Heart right ventricle (tissue), 16 donors: ENCODE measurements at regions of chr18 and their contacts with region 1.

Region 1: DNA sequence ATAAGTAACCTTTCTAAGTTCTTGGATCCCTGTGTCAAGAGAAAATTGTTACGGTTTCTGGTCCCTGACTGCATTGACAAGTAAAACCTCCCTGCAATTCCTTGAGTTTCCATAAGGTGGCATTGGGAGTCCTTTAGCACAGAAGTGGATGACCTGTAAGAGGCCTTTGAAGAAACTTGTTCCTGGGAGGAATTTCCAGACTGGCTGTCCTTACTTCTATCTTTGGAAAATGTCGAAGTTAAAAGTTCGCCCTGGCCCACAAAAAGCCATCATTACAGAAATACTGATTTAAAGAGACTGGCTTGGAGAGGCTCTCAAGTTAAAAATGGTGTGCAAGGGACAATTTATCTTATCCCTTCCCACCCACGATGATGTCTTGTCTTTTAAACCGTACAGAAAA is 218.4 kb downstream of the CDH20 start:
- DNase-seq: peak in 1 of 2 donors; percentile 77
- ATAC-seq: peak; percentile 65 to 92 (median 74)
- H3K4me3 ChIP-seq: no peak overlapping the region
- H3K27ac ChIP-seq: peak overlapping the region in 3 of 10 donors; percentile 16 to 36 (median 17)
- H3K4me1 ChIP-seq: peaks cover 0 to 11% (median 4%) of the 10 kb centered on the region in 9 donors
- H3K27me3 ChIP-seq: no peaks in the 10 kb centered on the region
- CTCF ChIP-seq: peak; percentile 73 to 90 (median 88)

Region 2: DNA sequence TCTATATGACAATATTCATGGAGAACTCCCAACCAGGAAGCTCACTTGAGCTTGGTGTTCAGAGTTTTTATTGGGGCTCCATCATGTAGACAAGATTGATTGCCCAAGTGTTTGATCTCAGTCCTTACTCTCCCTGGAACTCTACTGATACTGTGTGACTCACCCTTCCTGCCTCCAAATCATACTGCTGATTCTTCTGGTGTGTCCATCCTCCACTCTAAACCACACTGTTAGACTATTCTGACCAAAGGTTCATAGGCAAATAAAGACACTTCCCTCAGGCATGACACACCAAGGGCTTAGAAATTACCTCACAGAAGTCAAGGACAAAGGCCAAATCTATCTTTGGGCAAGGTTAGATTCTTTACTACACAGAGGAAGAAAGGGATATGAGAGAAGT is 326.2 kb before region 1 on chr18:
- intact Hi-C with region 1: no loop called
- DNase-seq: no peak
- ATAC-seq: no peak
- H3K4me3 ChIP-seq: no peak overlapping the region
- H3K27ac ChIP-seq: no peak overlapping the region
- H3K4me1 ChIP-seq: no peaks in the 10 kb centered on the region
- H3K27me3 ChIP-seq: no peaks in the 10 kb centered on the region
- CTCF ChIP-seq: no peak

Region 3: DNA sequence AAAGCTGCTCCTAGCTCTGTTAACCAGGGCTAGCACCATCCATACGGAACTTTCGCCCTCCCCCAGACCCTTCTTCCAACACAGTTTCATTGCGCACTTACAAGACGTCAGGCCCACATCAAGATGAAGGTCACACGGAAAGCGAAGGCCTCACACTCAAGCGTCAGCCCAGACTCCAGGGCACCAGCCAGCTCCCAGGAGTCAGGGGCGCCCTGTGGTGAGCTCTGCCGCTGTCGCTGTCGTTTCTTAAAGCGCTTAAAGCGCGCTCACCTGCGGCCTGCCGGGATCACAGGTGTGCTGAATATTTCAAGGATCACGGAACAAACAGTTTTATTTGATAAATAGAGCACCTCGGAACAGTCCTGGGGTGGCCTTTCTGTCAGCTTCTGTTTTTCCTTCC is 55.2 kb before region 1 on chr18:
- intact Hi-C with region 1: no loop called
- DNase-seq: no peak
- ATAC-seq: no peak
- H3K4me3 ChIP-seq: no peak overlapping the region
- H3K27ac ChIP-seq: no peak overlapping the region
- H3K4me1 ChIP-seq: no peaks in the 10 kb centered on the region
- H3K27me3 ChIP-seq: peaks cover 0 to 8% (median 0%) of the 10 kb centered on the region in 7 donors
- CTCF ChIP-seq: no peak

Region 4: GRCh38 chr18:61893971-61894750 is 342.6 kb after region 1 on chr18:
- intact Hi-C with region 1: loop called in 6 of 10 experiments (anchors 5 to 10 kb)
- DNase-seq: peak; percentile 87
- ATAC-seq: peak; percentile 90 to 96 (median 94)
- H3K4me3 ChIP-seq: peak overlapping the region; percentile 32 to 97 (median 90)
- H3K27ac ChIP-seq: peak overlapping the region; percentile 79 to 96 (median 90)
- H3K4me1 ChIP-seq: peaks cover 0 to 50% (median 31%) of the 10 kb centered on the region in 9 donors
- H3K27me3 ChIP-seq: peaks cover 0 to 61% (median 0%) of the 10 kb centered on the region in 7 donors
- CTCF ChIP-seq: peak; percentile 16 to 71 (median 37)